ENCODE measurements at regions of chr10 and their contacts with region 1.

Region 1: DNA sequence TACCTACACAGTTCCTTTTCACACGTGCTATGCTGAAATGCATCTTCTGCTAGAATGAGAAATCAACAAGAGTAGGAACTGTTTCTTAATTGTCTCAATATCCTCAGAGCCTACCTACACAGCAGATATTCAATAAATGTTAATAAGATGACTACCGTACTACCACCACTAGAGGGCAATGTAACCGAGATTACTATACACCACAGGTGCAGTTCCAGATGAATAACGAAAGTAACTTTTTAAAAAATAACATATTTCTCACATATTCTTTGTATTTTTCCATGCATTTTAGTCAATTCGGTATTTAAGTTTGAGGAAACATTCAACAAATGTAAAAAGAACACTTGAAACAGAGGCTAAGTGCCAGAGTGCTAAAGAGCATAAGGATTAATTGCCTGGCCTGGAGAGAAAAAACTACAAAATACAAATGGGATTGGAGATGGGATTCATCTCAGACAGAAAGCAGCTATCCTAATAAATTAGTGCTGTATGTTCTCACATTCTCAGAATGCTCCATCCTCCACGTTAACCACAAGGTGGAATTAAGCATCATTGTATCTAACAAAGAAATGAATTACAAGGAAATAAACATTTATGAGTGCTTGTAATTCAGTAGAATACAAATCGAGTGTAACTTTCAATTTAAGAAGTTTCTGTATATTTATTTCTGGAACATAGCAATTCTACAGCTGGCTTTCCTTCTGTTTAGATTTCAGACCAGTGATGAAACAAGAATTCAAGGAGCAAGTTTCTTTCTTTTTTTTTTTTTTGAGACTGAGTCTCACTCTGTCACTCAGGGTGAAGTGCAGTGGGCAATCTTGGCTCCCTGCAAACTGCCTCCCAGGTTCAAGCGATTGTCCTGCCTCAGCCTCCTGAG is 20.3 kb upstream of the HECTD2 start:
- DNase-seq: peak; percentile 17
- H3K4me3 Mint-ChIP-seq: no peak overlapping the region
- H3K27ac Mint-ChIP-seq: no peak overlapping the region
- H3K4me1 Mint-ChIP-seq: no peaks in the 10 kb centered on the region
- H3K27me3 Mint-ChIP-seq: peaks cover 43% of the 10 kb centered on the region
- CTCF ChIP-seq: no peak

Region 2: GRCh38 chr10:91632671-91633550 is 243.0 kb after region 1 on chr10 and contains the start of gene PPP1R3C:
- CTCF ChIA-PET with region 1: no interaction called
- intact Hi-C with region 1: loop called (anchors 5 kb)
- DNase-seq: peak; percentile 84
- H3K4me3 Mint-ChIP-seq: peak within 1 kb of the TSS; percentile 92
- H3K27ac Mint-ChIP-seq: peak within 1 kb of the TSS; percentile 41
- H3K4me1 Mint-ChIP-seq: peaks cover 15% of the 10 kb centered on the region
- H3K27me3 Mint-ChIP-seq: no peaks in the 10 kb centered on the region
- CTCF ChIP-seq: no peak
- total RNA-seq, gene PPP1R3C: 5.5 and 7.8 TPM in 2 replicates

Region 3: GRCh38 chr10:91694170-91694794 is 304.4 kb after region 1 on chr10:
- CTCF ChIA-PET with region 1: no interaction called
- intact Hi-C with region 1: loop called (anchors 5 kb)
- DNase-seq: peak; percentile 25
- H3K4me3 Mint-ChIP-seq: no peak overlapping the region
- H3K27ac Mint-ChIP-seq: no peak overlapping the region
- H3K4me1 Mint-ChIP-seq: peaks cover 13% of the 10 kb centered on the region
- H3K27me3 Mint-ChIP-seq: no peaks in the 10 kb centered on the region
- CTCF ChIP-seq: peak; percentile 21

Region 4: GRCh38 chr10:91745074-91745832 is 355.4 kb after region 1 on chr10:
- CTCF ChIA-PET with region 1: no interaction called
- intact Hi-C with region 1: loop called (anchors 5 kb)
- DNase-seq: peak; percentile 44
- H3K4me3 Mint-ChIP-seq: no peak overlapping the region
- H3K27ac Mint-ChIP-seq: no peak overlapping the region
- H3K4me1 Mint-ChIP-seq: no peaks in the 10 kb centered on the region
- H3K27me3 Mint-ChIP-seq: peaks cover 18% of the 10 kb centered on the region
- CTCF ChIP-seq: peak; percentile 20

Region 5: DNA sequence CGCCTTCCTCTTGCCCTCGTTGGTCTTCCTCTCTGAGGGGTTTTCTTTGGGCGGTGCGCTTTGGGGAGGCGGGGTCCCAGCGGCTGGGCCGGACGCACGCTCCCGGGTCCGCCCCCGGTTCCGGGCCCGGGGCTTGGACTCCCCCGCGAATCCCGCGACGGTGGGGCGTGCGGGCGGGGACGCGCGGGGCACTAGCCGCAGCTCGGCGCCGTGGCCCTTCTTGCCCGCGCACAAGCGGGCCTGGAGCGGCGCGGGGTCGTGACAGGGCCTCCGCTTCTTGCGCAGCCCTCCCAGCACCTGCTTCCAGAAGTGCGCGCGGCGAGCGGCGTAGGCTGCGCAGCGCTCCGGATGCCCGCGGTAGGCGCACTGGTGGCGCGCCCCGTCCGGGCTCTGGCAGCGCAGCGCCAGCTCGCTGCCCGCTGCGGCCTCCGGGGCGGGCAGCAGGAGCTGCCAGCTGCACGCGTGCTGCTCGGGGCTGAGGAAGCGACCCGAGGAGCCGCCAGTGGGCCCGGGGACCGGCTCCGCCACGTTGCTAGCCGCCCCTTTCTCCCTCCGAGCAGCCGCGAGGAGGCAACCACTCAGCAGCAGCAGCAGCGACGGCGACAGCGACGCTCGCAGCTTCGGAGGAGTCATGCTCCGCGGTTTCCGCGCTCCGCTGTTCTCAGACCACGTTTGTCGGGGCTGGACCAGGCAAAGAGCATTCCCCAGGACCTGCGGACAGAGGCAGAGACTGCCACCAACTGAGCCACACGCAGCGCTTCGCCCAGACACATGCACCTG is 518.7 kb after region 1 on chr10:
- CTCF ChIA-PET with region 1: no interaction called
- intact Hi-C with region 1: loop called (anchors 5 kb)
- DNase-seq: peak; percentile 76
- H3K4me3 Mint-ChIP-seq: peak overlapping the region; percentile 79
- H3K27ac Mint-ChIP-seq: no peak overlapping the region
- H3K4me1 Mint-ChIP-seq: peaks cover 20% of the 10 kb centered on the region
- H3K27me3 Mint-ChIP-seq: peaks cover 10% of the 10 kb centered on the region
- CTCF ChIP-seq: no peak